Activated CD8-positive, alpha-beta T cell treated with anti-CD3 and anti-CD28 coated beads for 36 hours (primary cell): ENCODE measurements at regions of chr7 and their contacts with region 1.

Region 1: GRCh38 chr7:117458977-117459583 is 20.7 kb upstream of the CFTR start:
- DNase-seq: no peak
- ATAC-seq: no peak
- H3K4me3 Mint-ChIP-seq: no peak overlapping the region
- H3K27ac Mint-ChIP-seq: no peak overlapping the region
- H3K4me1 Mint-ChIP-seq: no peaks in the 10 kb centered on the region
- H3K27me3 Mint-ChIP-seq: no peaks in the 10 kb centered on the region
- CTCF ChIP-seq: peak; percentile 56

Region 2: DNA sequence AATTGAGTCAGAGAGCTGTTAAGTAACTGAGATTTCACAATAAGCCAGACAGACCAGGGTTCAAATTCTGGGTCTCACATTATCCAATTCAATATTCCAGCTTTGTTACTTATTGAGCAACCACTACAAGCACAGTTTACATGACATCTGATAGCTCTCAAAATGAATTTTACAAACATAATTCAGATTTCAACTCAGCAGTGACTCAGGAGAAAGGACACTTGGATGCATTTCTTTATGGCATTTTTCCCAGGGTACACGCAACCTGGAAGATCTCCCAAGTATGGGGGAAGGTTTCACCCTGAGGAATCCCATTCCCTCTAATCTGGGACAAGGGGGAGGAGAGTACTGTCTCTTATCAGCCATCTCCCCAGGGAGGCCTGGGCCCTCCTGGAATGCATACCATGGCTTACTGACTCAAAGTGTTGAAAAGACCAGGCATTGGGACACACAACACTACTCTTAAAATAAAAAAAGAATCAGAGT is 123.2 kb after region 1 on chr7:
- CTCF ChIA-PET with region 1: no interaction called
- POLR2A ChIA-PET with region 1: no interaction called
- intact Hi-C with region 1: no loop called
- DNase-seq: no peak
- ATAC-seq: no peak
- H3K4me3 Mint-ChIP-seq: no peak overlapping the region
- H3K27ac Mint-ChIP-seq: no peak overlapping the region
- H3K4me1 Mint-ChIP-seq: no peaks in the 10 kb centered on the region
- H3K27me3 Mint-ChIP-seq: no peaks in the 10 kb centered on the region
- CTCF ChIP-seq: no peak

Region 3: DNA sequence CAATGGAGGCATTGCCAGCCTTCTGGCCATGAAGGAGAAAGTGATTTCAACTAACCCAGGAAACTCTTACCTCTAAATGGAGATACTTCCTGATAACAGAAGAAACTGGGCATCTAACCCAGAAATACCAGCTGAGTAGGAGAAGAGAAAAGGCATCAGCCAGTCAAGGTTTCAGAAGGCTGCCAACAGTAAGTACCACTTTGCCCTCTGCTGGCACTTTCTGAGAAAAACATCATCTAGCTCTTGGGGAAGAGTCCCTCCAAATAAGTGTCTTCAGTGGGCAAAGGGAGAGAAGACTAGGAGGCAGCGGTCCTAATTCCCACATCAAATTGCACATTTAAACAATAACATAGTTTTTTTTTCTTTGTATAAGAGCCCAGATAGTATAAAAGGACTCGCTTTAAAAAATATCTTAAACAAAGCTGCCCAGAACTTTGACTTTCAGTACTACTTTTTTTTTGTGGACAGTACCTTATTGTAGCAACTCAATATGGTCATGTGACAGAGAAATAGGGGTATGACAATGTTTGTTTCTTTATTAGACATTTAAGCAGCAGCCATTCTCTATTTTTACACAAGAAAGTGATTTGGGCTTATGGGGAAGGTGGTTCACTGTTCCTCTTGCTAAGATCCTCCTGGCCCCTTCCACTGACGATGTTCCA is 256.8 kb after region 1 on chr7:
- CTCF ChIA-PET with region 1: interaction called, 5 read pairs
- POLR2A ChIA-PET with region 1: no interaction called
- intact Hi-C with region 1: loop called (anchors 5 kb)
- DNase-seq: peak; percentile 30
- ATAC-seq: no peak
- H3K4me3 Mint-ChIP-seq: no peak overlapping the region
- H3K27ac Mint-ChIP-seq: no peak overlapping the region
- H3K4me1 Mint-ChIP-seq: no peaks in the 10 kb centered on the region
- H3K27me3 Mint-ChIP-seq: peaks cover 1% of the 10 kb centered on the region
- CTCF ChIP-seq: peak; percentile 35